Sigmoid colon (tissue), 7 donors: ENCODE measurements at regions of chr7 and their contacts with region 1.

Region 1: GRCh38 chr7:151782598-151783448 is 94.1 kb downstream of the PRKAG2 start:
- DNase-seq: peak; percentile 87
- H3K4me3 ChIP-seq: peak overlapping the region in 3 of 4 donors; percentile 13 to 36 (median 25)
- H3K27ac ChIP-seq: peak overlapping the region in 1 of 4 donors; percentile 29
- H3K4me1 ChIP-seq: peaks cover 0 to 19% (median 12%) of the 10 kb centered on the region in 4 donors
- H3K27me3 ChIP-seq: no peaks in the 10 kb centered on the region
- CTCF ChIP-seq: peak; percentile 73 to 90 (median 84)
- EP300 ChIP-seq: no peak
- POLR2A ChIP-seq: no peak

Region 2: GRCh38 chr7:151932358-151932876 is 149.6 kb after region 1 on chr7:
- intact Hi-C with region 1: loop called (anchors 2 kb)
- DNase-seq: no peak
- H3K4me3 ChIP-seq: no peak overlapping the region
- H3K27ac ChIP-seq: peak overlapping the region; percentile 13 to 45 (median 34)
- H3K4me1 ChIP-seq: peaks cover 0 to 9% (median 2%) of the 10 kb centered on the region in 4 donors
- H3K27me3 ChIP-seq: no peaks in the 10 kb centered on the region
- CTCF ChIP-seq: no peak
- EP300 ChIP-seq: no peak
- POLR2A ChIP-seq: peak in 1 of 2 donors; percentile 14

Region 3: DNA sequence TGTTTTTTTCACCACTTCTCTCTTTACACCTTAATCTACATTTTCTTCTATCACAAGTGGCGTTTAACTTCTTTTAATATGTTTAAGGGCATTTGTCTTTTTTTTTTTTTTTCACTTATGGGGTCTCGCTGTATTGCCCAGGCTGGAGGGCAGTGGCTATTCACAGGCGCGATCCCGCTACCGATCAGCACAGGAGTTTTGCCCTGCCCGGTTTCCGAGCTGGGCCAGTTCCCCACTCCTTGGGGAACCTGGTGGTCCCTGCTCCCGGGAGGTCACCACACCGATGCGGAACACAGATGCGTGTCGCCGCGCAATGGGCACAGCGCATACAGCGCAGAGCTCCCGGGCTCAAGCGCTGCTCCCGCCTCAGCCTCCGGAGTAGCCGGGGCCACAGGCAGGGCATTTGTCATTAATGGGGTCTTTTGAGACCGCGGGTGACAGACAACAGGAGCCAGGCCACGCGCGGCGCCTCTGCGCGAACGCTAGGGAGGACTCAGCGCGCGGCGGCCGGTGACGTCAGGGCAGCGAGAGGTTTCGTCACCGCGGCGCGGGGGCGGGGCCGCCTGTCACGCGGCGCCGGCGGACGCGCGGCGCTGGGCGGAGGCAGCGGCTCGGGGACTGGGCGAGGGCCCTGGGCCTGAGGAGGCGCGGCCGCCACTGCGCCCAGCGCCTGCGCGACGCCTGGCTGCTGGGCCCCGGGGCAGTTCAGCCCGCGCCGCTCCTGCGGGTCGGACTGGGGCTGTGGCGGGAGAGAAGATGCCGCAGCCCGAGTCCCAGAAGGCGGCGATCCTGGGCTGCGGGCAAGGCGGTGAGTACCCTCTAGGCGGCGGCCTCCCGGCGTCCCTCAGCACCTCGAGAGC is 242.5 kb after region 1 on chr7 and contains the start of gene GALNT11:
- intact Hi-C with region 1: loop called (anchors 5 kb)
- DNase-seq: peak; percentile 93
- H3K4me3 ChIP-seq: peak within 1 kb of the TSS; percentile 63 to 86 (median 82)
- H3K27ac ChIP-seq: peak within 1 kb of the TSS; percentile 89 to 94 (median 92)
- H3K4me1 ChIP-seq: peaks cover 0 to 20% (median 13%) of the 10 kb centered on the region in 4 donors
- H3K27me3 ChIP-seq: no peaks in the 10 kb centered on the region
- CTCF ChIP-seq: peak in 1 of 4 experiments; percentile 28
- EP300 ChIP-seq: no peak
- POLR2A ChIP-seq: peak in 1 of 2 donors; percentile 23
- total RNA-seq, gene GALNT11: 35.7 to 48.2 (median 40.4) TPM